ENCODE measurements at regions of chr12 and their contacts with region 1.

Region 1: DNA sequence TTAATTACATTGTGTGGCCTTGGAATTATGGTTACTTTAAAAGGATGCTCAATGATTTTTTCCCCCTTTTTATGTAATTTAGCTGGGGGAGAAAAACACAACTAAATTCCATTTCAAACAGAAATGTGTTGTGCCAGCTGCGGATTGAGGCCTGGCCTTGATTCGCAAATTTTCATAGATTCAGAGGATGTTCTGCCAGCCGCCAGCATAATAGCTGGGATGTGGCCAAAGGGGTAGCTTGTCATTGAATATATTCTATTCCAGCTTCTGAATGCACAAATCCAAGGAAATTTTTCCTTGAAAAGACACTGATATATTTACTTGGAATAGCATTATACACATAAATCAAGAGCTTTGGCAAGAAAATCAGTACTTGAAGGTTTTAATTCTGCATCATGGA is 43.7 kb downstream of the TRHDE start:
- DNase-seq: no peak
- H3K4me3 ChIP-seq: no peak overlapping the region
- CTCF ChIP-seq: no peak

Region 2: GRCh38 chr12:71870416-71870815 is 445.4 kb before region 1 on chr12:
- in situ Hi-C with region 1: no loop called
- DNase-seq: no peak
- H3K4me3 ChIP-seq: no peak overlapping the region
- CTCF ChIP-seq: no peak

Region 3: GRCh38 chr12:72098622-72099021 is 217.2 kb before region 1 on chr12:
- in situ Hi-C with region 1: no loop called
- DNase-seq: no peak
- H3K4me3 ChIP-seq: no peak overlapping the region
- CTCF ChIP-seq: no peak

Region 4: GRCh38 chr12:72282721-72283120 is 33.1 kb before region 1 on chr12:
- in situ Hi-C with region 1: no loop called
- DNase-seq: no peak
- H3K4me3 ChIP-seq: no peak overlapping the region
- CTCF ChIP-seq: peak; percentile 81

Region 5: GRCh38 chr12:72346363-72346944 is 30.6 kb after region 1 on chr12:
- in situ Hi-C with region 1: loop called (anchors 5 kb)
- DNase-seq: peak; percentile 78
- H3K4me3 ChIP-seq: no peak overlapping the region
- CTCF ChIP-seq: peak; percentile 69

Region 6: DNA sequence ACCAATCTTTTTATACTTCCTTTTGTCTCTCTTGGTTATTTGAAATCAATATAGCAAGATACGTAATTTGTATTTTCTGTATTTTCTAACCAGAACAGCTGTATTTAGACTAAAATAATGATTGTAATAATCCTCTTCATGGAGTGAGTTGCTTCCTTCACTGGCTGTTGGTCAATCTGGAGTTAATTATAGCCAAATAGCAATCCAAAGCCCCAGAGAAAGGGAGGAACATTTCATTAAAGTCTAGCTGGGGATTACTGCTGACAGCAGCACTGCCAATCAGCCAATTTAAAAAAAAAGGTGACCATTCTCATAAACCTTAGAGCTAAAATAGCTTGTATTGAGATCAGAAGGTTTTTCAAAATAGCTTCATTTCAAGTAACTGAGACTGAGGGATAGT is 74.3 kb after region 1 on chr12:
- in situ Hi-C with region 1: no loop called
- DNase-seq: no peak
- H3K4me3 ChIP-seq: no peak overlapping the region
- CTCF ChIP-seq: no peak